ENCODE measurements at regions of chr7 and their contacts with region 1.

Region 1: DNA sequence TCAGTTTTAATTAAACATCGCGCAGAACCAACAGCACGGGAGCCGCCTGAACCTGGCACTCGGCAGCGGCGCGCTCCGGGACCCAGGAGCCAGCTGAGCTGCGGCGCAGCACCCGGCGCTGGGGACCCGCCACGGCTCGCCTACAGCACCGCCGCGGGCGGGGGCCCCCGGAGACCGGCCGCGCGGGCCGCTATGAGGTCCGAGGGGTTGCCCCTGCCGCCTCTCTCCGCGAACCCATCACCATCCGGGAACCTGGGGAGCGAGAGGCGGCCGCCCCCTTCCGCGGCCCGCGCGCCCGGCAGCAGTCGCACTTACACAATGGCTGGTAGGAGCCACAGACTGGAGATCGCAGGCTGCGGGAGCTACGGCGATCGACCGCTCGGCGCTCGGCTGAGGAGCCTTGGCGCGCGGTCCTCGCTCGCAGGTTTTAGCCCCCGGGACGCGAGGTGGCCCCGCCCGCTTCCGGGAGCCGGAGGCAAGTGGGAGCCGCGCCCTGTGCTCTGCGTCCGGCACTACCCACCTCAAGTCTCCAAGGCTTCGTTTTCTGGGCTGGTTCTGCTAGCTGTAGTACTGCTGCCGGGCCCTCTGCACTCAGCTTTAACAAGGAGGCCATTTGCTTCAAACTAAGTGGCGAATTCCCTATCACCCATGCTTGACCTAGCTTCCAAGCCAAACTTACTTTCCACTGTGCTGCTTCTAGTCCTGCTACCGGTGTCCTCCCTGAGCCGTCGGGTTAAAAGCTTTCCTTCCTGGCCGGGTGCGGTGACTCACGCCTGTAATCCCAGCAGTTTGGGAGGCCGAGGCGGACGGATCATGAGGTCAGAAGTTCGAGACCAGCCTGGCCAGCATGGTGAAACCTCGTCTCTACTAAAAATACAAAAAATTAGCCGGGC is at the start of gene TPK1:
- DNase-seq: peak; percentile 90
- H3K4me3 Mint-ChIP-seq: peak within 1 kb of the TSS; percentile 92
- H3K27ac Mint-ChIP-seq: peak within 1 kb of the TSS; percentile 97
- H3K4me1 Mint-ChIP-seq: peaks cover 41% of the 10 kb centered on the region
- H3K27me3 Mint-ChIP-seq: no peaks in the 10 kb centered on the region
- total RNA-seq, gene TPK1: 12.4 and 17.5 TPM in 2 replicates

Region 2: DNA sequence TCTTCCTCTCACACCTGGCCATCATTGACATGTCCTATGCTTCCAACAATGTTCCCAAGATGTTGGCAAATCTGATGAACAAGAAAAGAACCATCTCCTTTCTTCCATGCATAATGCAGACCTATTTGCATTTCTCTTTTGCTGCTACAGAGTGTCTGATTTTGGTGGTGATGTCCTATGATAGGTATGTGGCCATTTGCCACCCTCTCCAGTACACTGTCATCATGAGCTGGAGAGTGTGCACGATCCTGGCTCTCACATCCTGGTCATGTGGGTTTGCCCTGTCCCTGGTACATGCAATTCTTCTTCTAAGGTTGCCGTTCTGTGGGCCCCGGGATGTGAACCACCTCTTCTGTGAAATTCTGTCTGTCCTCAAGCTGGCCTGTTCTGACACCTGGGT is 693.7 kb before region 1 on chr7:
- intact Hi-C with region 1: no loop called
- DNase-seq: no peak
- H3K4me3 Mint-ChIP-seq: no peak overlapping the region
- H3K27ac Mint-ChIP-seq: no peak overlapping the region
- H3K4me1 Mint-ChIP-seq: no peaks in the 10 kb centered on the region
- H3K27me3 Mint-ChIP-seq: peaks cover 9% of the 10 kb centered on the region

Region 3: DNA sequence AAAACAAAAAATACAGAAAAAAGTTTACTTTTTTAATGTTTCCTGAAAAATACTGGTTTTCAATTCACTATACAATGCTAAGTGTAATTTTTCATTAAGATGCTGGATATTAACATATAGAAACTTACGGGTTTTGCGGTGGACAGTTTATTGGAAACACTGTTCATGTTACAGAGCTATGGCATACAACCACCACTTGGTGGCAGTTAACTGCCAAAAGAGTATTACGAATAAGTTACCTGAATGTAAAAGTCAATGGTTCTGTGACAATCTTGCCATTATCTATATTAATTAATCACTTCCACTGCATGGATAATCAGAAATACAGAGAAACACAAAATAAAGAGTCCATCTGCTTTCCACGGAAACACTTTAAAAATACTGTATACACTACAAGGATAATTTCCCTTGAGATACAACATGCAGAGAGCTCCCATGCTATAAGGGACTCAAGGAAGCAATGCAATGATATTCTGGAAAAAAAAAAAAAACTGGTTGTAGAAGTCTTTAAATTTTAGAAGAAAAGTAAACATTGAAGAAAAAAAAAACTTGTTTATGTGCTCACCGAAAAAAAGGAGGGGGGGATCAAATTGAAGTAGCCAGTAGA is 97.1 kb before region 1 on chr7:
- intact Hi-C with region 1: loop called (anchors 5 kb)
- DNase-seq: no peak
- H3K4me3 Mint-ChIP-seq: no peak overlapping the region
- H3K27ac Mint-ChIP-seq: no peak overlapping the region
- H3K4me1 Mint-ChIP-seq: no peaks in the 10 kb centered on the region
- H3K27me3 Mint-ChIP-seq: no peaks in the 10 kb centered on the region

Region 4: GRCh38 chr7:144786522-144786921 is 49.4 kb before region 1 on chr7:
- intact Hi-C with region 1: loop called (anchors 2 kb)
- DNase-seq: no peak
- H3K4me3 Mint-ChIP-seq: no peak overlapping the region
- H3K27ac Mint-ChIP-seq: no peak overlapping the region
- H3K4me1 Mint-ChIP-seq: peaks cover 10% of the 10 kb centered on the region
- H3K27me3 Mint-ChIP-seq: no peaks in the 10 kb centered on the region

Region 5: GRCh38 chr7:144812379-144813283 is 23.3 kb before region 1 on chr7:
- intact Hi-C with region 1: loop called (anchors 2 kb)
- DNase-seq: peak; percentile 32
- H3K4me3 Mint-ChIP-seq: peak overlapping the region; percentile 68
- H3K27ac Mint-ChIP-seq: peak overlapping the region; percentile 82
- H3K4me1 Mint-ChIP-seq: peaks cover 35% of the 10 kb centered on the region
- H3K27me3 Mint-ChIP-seq: no peaks in the 10 kb centered on the region

Region 6: GRCh38 chr7:144821067-144821466 is 14.8 kb before region 1 on chr7:
- intact Hi-C with region 1: loop called (anchors 1 kb)
- DNase-seq: no peak
- H3K4me3 Mint-ChIP-seq: peak overlapping the region; percentile 31
- H3K27ac Mint-ChIP-seq: peak overlapping the region; percentile 87
- H3K4me1 Mint-ChIP-seq: peaks cover 67% of the 10 kb centered on the region
- H3K27me3 Mint-ChIP-seq: no peaks in the 10 kb centered on the region

Region 7: GRCh38 chr7:144848078-144848477 is 12.2 kb after region 1 on chr7:
- intact Hi-C with region 1: no loop called
- DNase-seq: no peak
- H3K4me3 Mint-ChIP-seq: no peak overlapping the region
- H3K27ac Mint-ChIP-seq: no peak overlapping the region
- H3K4me1 Mint-ChIP-seq: peaks cover 3% of the 10 kb centered on the region
- H3K27me3 Mint-ChIP-seq: peaks cover 3% of the 10 kb centered on the region